ENCODE measurements at regions of chr10 and their contacts with region 1.

Region 1: GRCh38 chr10:32346134-32346550 is 816 bp downstream of the EPC1 start:
- DNase-seq: peak; percentile 93
- ATAC-seq: peak; percentile 84
- H3K4me3 Mint-ChIP-seq: peak overlapping the region; percentile 96
- H3K27ac Mint-ChIP-seq: peak overlapping the region; percentile 100
- H3K4me1 Mint-ChIP-seq: peaks cover 72% of the 10 kb centered on the region
- H3K27me3 Mint-ChIP-seq: no peaks in the 10 kb centered on the region
- CTCF ChIP-seq: peak; percentile 67

Region 2: GRCh38 chr10:31928549-31929260 is 417.4 kb before region 1 on chr10 and contains the start of gene ARHGAP12:
- CTCF ChIA-PET with region 1: no interaction called
- POLR2A ChIA-PET with region 1: no interaction called
- intact Hi-C with region 1: loop called (anchors 1 kb)
- DNase-seq: peak; percentile 97
- ATAC-seq: peak; percentile 74
- H3K4me3 Mint-ChIP-seq: peak within 1 kb of the TSS; percentile 91
- H3K27ac Mint-ChIP-seq: peak within 1 kb of the TSS; percentile 88
- H3K4me1 Mint-ChIP-seq: peaks cover 44% of the 10 kb centered on the region
- H3K27me3 Mint-ChIP-seq: no peaks in the 10 kb centered on the region
- CTCF ChIP-seq: no peak
- total RNA-seq, gene ARHGAP12: 23.2 and 27.3 TPM in 2 replicates

Region 3: GRCh38 chr10:32190890-32191491 is 155.2 kb before region 1 on chr10:
- CTCF ChIA-PET with region 1: no interaction called
- POLR2A ChIA-PET with region 1: no interaction called
- intact Hi-C with region 1: loop called (anchors 1 kb)
- DNase-seq: no peak
- ATAC-seq: peak; percentile 75
- H3K4me3 Mint-ChIP-seq: no peak overlapping the region
- H3K27ac Mint-ChIP-seq: peak overlapping the region; percentile 75
- H3K4me1 Mint-ChIP-seq: peaks cover 4% of the 10 kb centered on the region
- H3K27me3 Mint-ChIP-seq: peaks cover 6% of the 10 kb centered on the region
- CTCF ChIP-seq: no peak

Region 4: DNA sequence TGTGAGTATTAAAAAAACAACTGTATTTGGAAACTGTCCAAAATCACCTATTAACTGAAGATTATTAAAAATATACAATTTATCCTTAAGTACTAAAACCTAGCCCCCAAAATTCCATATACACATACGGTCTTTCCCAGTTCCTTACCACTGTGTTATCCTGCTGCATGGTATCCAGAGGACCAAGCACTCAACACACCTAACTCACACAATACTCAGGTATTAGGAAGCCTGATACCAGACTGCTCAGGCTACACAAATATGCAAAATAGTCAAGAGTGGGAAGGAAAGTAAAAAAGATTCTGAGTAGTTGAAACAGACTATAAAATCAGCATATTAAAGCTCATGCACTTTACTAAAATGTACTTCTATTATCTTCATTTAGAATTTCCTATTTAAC is 66.3 kb before region 1 on chr10:
- CTCF ChIA-PET with region 1: no interaction called
- POLR2A ChIA-PET with region 1: no interaction called
- intact Hi-C with region 1: loop called (anchors 2 kb)
- DNase-seq: no peak
- ATAC-seq: no peak
- H3K4me3 Mint-ChIP-seq: no peak overlapping the region
- H3K27ac Mint-ChIP-seq: no peak overlapping the region
- H3K4me1 Mint-ChIP-seq: peaks cover under 1% of the 10 kb centered on the region
- H3K27me3 Mint-ChIP-seq: no peaks in the 10 kb centered on the region
- CTCF ChIP-seq: no peak

Region 5: DNA sequence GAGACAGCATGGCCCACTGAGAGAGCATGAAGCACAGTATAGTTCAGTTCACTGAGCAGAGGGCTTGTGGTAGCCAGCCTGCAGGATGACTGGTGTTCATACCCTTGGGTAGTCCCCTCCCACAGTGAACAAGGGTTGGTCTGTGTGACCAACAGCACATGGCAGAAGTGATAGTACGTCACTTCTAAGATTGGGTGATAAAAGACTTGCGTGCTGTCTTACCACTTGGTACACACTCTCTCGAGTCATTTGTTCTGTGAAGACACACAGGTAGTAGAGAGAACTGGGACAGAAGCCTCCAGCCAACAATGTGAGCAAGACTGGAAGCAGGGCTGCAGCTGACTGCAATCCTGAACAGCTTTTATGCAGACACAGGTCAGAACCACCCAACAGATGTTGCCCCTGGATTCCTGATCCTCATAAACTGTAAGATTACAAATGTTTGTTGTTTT is 13.8 kb before region 1 on chr10:
- CTCF ChIA-PET with region 1: interaction called, 6 read pairs
- POLR2A ChIA-PET with region 1: interaction called, 10 read pairs
- intact Hi-C with region 1: loop called (anchors 1 kb)
- DNase-seq: peak; percentile 25
- ATAC-seq: peak; percentile 100
- H3K4me3 Mint-ChIP-seq: peak overlapping the region; percentile 42
- H3K27ac Mint-ChIP-seq: peak overlapping the region; percentile 85
- H3K4me1 Mint-ChIP-seq: peaks cover 96% of the 10 kb centered on the region
- H3K27me3 Mint-ChIP-seq: no peaks in the 10 kb centered on the region
- CTCF ChIP-seq: no peak

Region 6: DNA sequence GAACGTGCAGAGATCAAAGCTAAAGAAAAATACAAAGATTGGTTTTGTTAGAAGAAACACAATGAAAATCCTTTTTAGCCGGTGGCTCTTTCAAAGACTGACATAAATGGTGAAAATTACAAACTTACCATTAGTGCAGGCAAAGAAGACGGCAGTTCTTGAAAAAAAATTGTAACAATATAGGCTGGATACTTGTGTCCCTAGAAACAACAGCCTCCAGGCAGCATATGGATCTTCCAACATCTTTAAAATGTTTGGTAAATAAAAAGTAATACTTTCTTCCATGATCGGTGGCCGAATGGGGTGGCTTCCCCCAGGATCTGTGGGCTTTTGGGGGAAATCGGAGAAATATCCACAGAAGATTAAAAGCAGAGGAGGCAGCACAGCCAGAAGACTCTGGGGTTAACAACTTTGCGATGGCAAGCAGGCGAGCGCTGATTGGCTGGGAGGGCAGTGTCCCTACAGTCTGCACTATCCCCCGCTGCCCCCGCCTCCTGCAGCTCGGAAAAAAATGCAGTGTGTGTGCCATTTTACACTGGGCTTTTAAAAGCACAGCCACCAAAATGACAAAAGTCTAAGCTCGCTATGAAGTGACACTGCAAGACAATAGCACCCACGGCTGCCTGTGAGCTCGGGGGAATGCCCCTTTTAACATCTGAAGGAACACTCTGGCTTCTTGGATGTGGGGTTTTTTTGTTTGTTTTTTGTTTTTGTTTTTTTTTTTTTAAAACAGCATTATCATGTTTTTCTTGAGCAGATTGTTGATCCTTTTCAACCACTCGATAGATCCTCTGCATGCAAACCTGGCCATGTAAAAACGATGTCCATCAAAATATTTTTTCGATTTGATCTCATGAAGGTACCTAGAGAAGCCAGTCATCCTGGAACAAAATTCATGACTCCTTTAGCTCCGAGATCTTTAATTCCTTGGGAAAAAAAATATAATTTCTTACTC is 32.5 kb after region 1 on chr10:
- CTCF ChIA-PET with region 1: interaction called, 5 read pairs
- POLR2A ChIA-PET with region 1: interaction called, 54 read pairs
- intact Hi-C with region 1: loop called (anchors 1 kb)
- DNase-seq: peak; percentile 73
- ATAC-seq: peak; percentile 94
- H3K4me3 Mint-ChIP-seq: no peak overlapping the region
- H3K27ac Mint-ChIP-seq: no peak overlapping the region
- H3K4me1 Mint-ChIP-seq: peaks cover 21% of the 10 kb centered on the region
- H3K27me3 Mint-ChIP-seq: no peaks in the 10 kb centered on the region
- CTCF ChIP-seq: no peak

Region 7: GRCh38 chr10:32958085-32959005 is 612.2 kb after region 1 on chr10 and contains the start of gene ITGB1:
- CTCF ChIA-PET with region 1: no interaction called
- POLR2A ChIA-PET with region 1: no interaction called
- intact Hi-C with region 1: loop called (anchors 2 kb)
- DNase-seq: peak; percentile 85
- ATAC-seq: peak; percentile 83
- H3K4me3 Mint-ChIP-seq: peak within 1 kb of the TSS; percentile 86
- H3K27ac Mint-ChIP-seq: peak within 1 kb of the TSS; percentile 95
- H3K4me1 Mint-ChIP-seq: peaks cover 72% of the 10 kb centered on the region
- H3K27me3 Mint-ChIP-seq: no peaks in the 10 kb centered on the region
- CTCF ChIP-seq: no peak
- total RNA-seq, gene ITGB1: 80.3 and 87.4 TPM in 2 replicates